ENCODE measurements at regions of chr17 and their contacts with region 1.

Region 1: DNA sequence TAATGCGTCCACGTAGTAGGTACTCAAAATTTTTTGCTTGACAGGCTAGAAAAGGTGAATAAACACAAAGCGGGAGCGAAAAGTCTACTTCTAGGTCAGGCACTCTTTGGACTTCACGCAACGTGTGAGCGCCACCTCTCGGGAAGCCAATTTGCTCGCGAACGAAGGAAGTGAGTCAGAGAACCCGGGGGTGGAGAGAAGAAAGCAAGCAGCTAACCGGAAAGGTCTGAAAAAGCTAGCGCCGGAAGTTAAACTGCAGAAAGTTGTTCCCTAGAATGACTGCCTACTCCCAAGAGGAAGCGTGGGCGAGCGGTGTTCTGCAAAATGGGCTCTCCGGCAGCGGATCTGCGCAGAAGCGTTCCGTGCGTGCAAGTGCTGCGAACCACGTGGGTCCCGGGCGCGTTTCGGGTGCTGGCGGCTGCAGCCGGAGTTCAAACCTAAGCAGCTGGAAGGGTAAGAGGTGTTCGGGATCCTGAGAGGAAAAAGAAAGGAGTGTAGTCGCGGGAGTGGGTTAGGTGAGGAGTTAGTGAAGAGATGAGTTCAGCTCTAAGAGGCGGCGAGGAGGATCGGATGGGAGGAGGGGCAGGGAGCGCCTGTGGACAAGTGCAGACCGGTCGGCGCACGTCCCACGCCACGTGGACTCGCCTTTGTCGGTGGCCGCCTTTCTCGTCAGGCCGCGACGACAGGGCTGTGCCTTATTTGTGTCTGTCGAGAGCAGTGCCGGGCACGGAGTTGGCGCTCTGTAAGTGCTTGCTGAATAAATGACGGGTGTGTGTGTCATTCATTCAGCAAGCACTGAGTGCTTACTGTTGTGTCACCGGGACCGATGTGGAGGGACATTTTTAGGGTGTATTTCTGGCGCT is at the start of gene NME1:
- DNase-seq: peak; percentile 98
- ATAC-seq: peak; percentile 92
- H3K4me3 Mint-ChIP-seq: no peak within 1 kb of the TSS
- H3K27ac Mint-ChIP-seq: no peak within 1 kb of the TSS
- H3K4me1 Mint-ChIP-seq: peaks cover 18% of the 10 kb centered on the region
- H3K27me3 Mint-ChIP-seq: no peaks in the 10 kb centered on the region
- CTCF ChIP-seq: peak; percentile 71
- total RNA-seq, gene NME1: 296 to 301 TPM

Region 2: GRCh38 chr17:50995645-50996044 is 157.8 kb before region 1 on chr17:
- CTCF ChIA-PET with region 1: interaction called, 145 read pairs
- POLR2A ChIA-PET with region 1: interaction called, 11 read pairs
- intact Hi-C with region 1: loop called (anchors 5 kb)
- DNase-seq: no peak
- ATAC-seq: no peak
- H3K4me3 Mint-ChIP-seq: no peak overlapping the region
- H3K27ac Mint-ChIP-seq: no peak overlapping the region
- H3K4me1 Mint-ChIP-seq: no peaks in the 10 kb centered on the region
- H3K27me3 Mint-ChIP-seq: no peaks in the 10 kb centered on the region
- CTCF ChIP-seq: no peak

Region 3: DNA sequence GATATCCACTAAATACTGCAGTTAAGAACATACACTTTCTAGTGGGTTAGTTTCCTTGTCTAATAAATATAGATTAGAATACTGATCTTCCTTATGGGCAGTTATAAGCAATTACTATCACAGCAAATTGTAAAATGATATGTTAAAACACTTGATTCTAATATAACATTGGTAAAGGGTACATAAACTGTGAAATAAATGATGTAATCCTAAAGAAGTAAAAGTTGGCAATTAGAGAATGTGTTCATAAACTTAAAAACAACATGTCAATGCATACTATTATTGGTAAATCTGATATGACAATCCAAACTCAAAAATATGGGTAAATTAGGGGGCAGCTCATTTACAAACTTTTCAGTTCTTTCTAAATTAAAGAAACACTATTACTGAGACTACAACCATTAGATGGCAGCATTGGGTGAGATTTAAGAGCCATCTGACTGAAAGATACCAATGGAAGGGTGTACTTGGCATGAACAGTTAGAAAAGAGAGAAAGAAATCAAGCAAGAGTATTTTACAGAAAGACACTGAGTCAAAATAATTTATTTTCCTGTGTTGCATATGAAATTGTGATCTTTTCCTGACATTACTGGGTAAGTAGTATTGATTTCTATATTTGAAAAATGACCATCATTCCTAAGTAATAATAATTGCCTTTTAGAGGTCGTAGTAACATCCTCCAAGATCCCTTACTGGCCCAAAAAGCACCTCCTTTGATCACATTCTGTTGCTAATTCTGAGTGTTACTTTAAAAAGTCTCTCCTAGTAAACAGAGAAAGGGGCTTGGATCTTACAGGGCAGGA is 152.4 kb before region 1 on chr17:
- CTCF ChIA-PET with region 1: interaction called, 145 read pairs
- POLR2A ChIA-PET with region 1: interaction called, 15 read pairs
- intact Hi-C with region 1: loop called (anchors 5 kb)
- DNase-seq: no peak
- ATAC-seq: peak; percentile 78
- H3K4me3 Mint-ChIP-seq: no peak overlapping the region
- H3K27ac Mint-ChIP-seq: peak overlapping the region; percentile 28
- H3K4me1 Mint-ChIP-seq: no peaks in the 10 kb centered on the region
- H3K27me3 Mint-ChIP-seq: no peaks in the 10 kb centered on the region
- CTCF ChIP-seq: peak; percentile 69

Region 4: GRCh38 chr17:51029568-51030463 is 123.6 kb before region 1 on chr17:
- CTCF ChIA-PET with region 1: interaction called, 11 read pairs
- POLR2A ChIA-PET with region 1: interaction called, 3 read pairs
- intact Hi-C with region 1: no loop called
- DNase-seq: no peak
- ATAC-seq: peak; percentile 67
- H3K4me3 Mint-ChIP-seq: peak overlapping the region; percentile 44
- H3K27ac Mint-ChIP-seq: peak overlapping the region; percentile 84
- H3K4me1 Mint-ChIP-seq: peaks cover 27% of the 10 kb centered on the region
- H3K27me3 Mint-ChIP-seq: no peaks in the 10 kb centered on the region
- CTCF ChIP-seq: no peak

Region 5: GRCh38 chr17:51120739-51121617 is 32.5 kb before region 1 on chr17 and contains the start of gene SPAG9:
- CTCF ChIA-PET with region 1: interaction called, 22 read pairs
- POLR2A ChIA-PET with region 1: interaction called, 28 read pairs
- intact Hi-C with region 1: no loop called
- DNase-seq: peak; percentile 92
- ATAC-seq: peak; percentile 79
- H3K4me3 Mint-ChIP-seq: peak within 1 kb of the TSS; percentile 91
- H3K27ac Mint-ChIP-seq: peak within 1 kb of the TSS; percentile 98
- H3K4me1 Mint-ChIP-seq: peaks cover 46% of the 10 kb centered on the region
- H3K27me3 Mint-ChIP-seq: no peaks in the 10 kb centered on the region
- CTCF ChIP-seq: no peak
- total RNA-seq, gene SPAG9: 54.3 to 59.8 TPM

Region 6: DNA sequence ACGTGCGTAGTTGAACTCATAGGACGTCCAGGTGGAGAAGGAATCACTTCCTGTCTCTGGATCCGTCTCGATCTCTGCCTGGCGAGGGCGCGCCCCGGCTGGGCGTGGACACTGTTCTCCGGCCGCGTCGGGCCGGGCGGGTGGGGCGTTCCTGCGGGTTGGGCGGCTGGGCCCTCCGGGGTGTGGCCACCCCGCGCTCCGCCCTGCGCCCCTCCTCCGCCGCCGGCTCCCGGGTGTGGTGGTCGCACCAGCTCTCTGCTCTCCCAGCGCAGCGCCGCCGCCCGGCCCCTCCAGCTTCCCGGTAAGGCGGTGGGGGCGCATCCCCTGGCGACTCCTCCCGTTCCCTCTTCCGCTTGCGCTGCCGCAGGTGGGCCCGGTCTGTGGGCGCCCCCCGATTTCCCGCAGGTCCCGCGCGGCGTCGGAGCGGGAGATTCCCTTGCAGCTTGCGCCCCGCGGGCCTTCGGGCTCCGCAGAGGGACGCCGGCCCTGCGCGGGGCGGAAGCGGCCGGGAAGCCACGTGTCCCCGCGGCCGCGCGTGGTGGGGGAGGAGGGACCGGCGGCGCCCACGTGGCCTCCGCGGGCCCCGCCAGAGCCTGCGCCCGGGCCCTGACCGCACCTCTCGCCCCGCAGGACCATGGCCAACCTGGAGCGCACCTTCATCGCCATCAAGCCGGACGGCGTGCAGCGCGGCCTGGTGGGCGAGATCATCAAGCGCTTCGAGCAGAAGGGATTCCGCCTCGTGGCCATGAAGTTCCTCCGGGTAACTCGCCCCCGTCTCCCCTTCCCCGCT is 13.0 kb after region 1 on chr17 and contains the start of gene NME2:
- CTCF ChIA-PET with region 1: interaction called, 13 read pairs
- POLR2A ChIA-PET with region 1: interaction called, 71 read pairs
- intact Hi-C with region 1: no loop called
- DNase-seq: peak; percentile 68
- ATAC-seq: peak; percentile 86
- H3K4me3 Mint-ChIP-seq: peak within 1 kb of the TSS; percentile 84
- H3K27ac Mint-ChIP-seq: peak within 1 kb of the TSS; percentile 97
- H3K4me1 Mint-ChIP-seq: peaks cover 31% of the 10 kb centered on the region
- H3K27me3 Mint-ChIP-seq: no peaks in the 10 kb centered on the region
- CTCF ChIP-seq: no peak
- total RNA-seq, gene NME2: 927 to 948 TPM

Measured in activated CD8-positive, alpha-beta T cell treated with anti-CD3 and anti-CD28 coated beads for 36 hours (primary cell).